Activated naive CD4-positive, alpha-beta T cell treated with anti-CD3 and anti-CD28 coated beads for 36 hours (primary cell): ENCODE measurements at regions of chr2 and their contacts with region 1.

Region 1: GRCh38 chr2:98479959-98480524 is 35.4 kb downstream of the INPP4A start:
- DNase-seq: peak; percentile 70
- H3K4me3 Mint-ChIP-seq: peak overlapping the region; percentile 31
- H3K27ac Mint-ChIP-seq: peak overlapping the region; percentile 66
- H3K4me1 Mint-ChIP-seq: peaks cover 98% of the 10 kb centered on the region
- H3K27me3 Mint-ChIP-seq: no peaks in the 10 kb centered on the region

Region 2: DNA sequence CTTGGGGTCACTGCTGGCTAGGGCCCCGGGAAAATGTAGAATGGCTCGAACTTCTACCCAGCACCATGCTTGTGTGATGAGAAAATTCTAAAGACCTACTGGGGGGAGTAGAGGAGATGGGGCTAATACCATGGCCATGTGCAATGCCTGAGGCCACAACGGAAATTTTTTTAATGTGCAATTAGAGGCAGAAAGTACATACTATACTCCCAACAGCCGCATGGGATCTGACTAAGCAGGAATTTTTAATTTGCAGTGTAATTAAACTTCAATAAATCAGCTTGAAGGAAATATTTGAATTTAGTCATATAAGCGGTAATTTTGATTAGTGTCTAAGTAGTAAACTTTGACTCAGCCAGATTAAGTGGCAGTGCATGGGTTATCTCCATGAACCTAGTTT is 187.0 kb before region 1 on chr2:
- CTCF ChIA-PET with region 1: no interaction called
- intact Hi-C with region 1: no loop called
- DNase-seq: no peak
- H3K4me3 Mint-ChIP-seq: no peak overlapping the region
- H3K27ac Mint-ChIP-seq: no peak overlapping the region
- H3K4me1 Mint-ChIP-seq: no peaks in the 10 kb centered on the region
- H3K27me3 Mint-ChIP-seq: peaks cover 21% of the 10 kb centered on the region

Region 3: DNA sequence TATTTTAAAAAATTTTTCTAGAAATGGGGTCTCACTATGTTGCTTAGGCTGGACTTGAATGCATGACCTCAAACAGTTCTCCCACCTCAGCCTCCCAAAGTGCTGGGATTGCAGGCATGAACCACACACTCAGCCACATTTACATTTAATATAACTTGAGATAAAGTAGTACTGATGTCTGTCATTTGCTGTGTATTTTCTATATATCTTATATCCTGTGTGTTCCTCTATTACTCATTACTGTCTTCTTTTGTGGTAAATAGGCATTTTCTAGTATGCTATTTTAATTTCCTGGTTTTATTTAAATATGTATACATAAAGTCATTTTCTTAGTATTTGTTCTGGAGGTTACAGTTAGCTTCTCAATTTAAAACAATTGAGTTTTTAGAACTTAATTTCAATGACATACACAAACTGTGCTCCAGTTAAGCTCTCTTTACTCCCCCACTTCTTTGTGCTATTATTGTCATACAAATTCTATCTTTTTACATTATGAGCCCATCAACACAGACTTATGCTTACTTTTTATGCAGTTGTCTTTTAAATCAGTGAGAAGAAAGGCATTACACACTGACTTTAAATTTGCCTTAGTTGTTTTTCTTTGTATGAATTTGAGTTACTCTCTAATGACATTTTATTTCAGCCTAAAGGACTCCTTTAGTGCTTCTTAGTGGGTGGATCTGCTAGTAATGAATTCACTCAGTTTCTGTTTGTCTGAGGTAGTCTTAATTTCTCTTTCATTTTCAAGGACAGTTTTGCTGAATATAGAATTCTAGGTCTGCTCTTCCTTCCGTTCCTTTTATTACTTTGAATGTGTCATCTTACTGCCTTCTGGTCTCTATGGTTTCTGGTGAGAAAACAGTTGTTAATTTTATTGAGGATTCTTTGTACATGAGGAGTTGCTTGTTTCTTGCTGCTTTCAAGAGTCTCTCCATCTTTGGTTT is 41.6 kb before region 1 on chr2:
- CTCF ChIA-PET with region 1: interaction called, 3 read pairs
- intact Hi-C with region 1: loop called (anchors 1 kb)
- DNase-seq: no peak
- H3K4me3 Mint-ChIP-seq: no peak overlapping the region
- H3K27ac Mint-ChIP-seq: peak overlapping the region; percentile 73
- H3K4me1 Mint-ChIP-seq: peaks cover 19% of the 10 kb centered on the region
- H3K27me3 Mint-ChIP-seq: no peaks in the 10 kb centered on the region